ENCODE measurements at regions of chr5 and their contacts with region 1.

Region 1: GRCh38 chr5:41856644-41857491 is 13.4 kb downstream of the OXCT1 start:
- DNase-seq: peak; percentile 64
- H3K4me3 ChIP-seq: no peak overlapping the region
- H3K27ac ChIP-seq: peak overlapping the region in 1 of 2 donors; percentile 49
- H3K4me1 ChIP-seq: peaks cover 8% of the 10 kb centered on the region
- H3K27me3 ChIP-seq: no peaks in the 10 kb centered on the region
- CTCF ChIP-seq: peak; percentile 37 to 76 (median 74)
- POLR2A ChIP-seq: no peak

Region 2: DNA sequence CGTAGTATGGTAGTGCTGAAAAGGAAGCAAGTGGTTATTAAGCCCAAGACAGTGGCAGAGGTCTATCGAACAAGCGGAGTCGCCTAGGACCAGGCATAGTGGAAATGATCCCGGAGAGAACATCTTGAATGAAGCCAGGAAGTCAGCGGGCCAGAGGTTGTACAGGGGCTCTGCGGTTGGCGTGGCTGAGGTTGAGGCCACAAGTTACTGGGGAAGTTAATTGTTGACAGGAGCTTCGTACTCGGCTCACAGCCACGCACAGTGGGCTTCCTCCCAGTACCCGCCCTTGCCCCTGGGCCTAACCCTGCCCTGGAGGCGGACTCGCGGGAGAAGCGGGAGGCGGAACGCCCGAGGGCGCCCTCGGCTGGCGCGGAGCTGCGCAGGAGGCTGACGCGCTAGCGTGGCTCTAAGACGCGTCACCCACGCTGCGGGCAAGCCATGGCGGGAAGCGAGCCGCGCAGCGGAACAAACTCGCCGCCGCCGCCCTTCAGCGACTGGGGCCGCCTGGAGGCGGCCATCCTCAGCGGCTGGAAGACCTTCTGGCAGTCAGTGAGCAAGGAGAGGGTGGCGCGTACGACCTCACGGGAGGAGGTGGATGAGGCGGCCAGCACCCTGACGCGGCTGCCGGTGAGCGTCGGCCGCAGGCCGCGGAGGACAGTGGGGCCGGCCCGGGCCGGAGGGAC is 68.1 kb after region 1 on chr5 and contains the start of gene FBXO4:
- intact Hi-C with region 1: loop called (anchors 2 kb)
- DNase-seq: peak; percentile 74
- H3K4me3 ChIP-seq: peak within 1 kb of the TSS; percentile 80 to 82
- H3K27ac ChIP-seq: peak within 1 kb of the TSS; percentile 94 to 97
- H3K4me1 ChIP-seq: no peaks in the 10 kb centered on the region
- H3K27me3 ChIP-seq: no peaks in the 10 kb centered on the region
- CTCF ChIP-seq: peak in 3 of 4 experiments; percentile 42 to 57 (median 54)
- POLR2A ChIP-seq: peak; percentile 30
- total RNA-seq, gene FBXO4: 14.4 to 25.7 TPM

Region 3: DNA sequence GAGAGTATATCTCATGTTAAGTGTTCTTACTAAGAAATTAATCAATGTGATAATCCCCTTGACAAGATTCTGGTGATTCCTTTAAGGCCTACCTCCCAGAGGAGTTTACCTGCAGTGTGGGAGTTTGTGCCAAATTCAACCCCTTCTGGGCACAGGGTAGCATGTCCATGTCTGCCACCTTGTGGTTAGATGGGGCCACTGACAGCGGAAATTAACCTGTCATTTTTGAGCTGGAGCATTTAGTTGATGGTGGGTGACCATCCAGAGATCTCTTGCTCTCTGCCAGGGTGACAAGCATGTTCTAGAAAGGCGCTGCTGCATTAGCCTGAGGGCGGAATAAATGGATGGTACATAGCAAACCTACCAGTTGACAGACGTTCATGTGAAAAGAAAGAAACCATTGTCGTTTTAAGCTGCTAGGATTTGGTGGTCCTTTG is 200.4 kb after region 1 on chr5:
- intact Hi-C with region 1: loop called (anchors 10 kb)
- DNase-seq: peak; percentile 33
- H3K4me3 ChIP-seq: no peak overlapping the region
- H3K27ac ChIP-seq: no peak overlapping the region
- H3K4me1 ChIP-seq: no peaks in the 10 kb centered on the region
- H3K27me3 ChIP-seq: no peaks in the 10 kb centered on the region
- CTCF ChIP-seq: peak; percentile 18 to 71 (median 59)
- POLR2A ChIP-seq: no peak

Region 4: DNA sequence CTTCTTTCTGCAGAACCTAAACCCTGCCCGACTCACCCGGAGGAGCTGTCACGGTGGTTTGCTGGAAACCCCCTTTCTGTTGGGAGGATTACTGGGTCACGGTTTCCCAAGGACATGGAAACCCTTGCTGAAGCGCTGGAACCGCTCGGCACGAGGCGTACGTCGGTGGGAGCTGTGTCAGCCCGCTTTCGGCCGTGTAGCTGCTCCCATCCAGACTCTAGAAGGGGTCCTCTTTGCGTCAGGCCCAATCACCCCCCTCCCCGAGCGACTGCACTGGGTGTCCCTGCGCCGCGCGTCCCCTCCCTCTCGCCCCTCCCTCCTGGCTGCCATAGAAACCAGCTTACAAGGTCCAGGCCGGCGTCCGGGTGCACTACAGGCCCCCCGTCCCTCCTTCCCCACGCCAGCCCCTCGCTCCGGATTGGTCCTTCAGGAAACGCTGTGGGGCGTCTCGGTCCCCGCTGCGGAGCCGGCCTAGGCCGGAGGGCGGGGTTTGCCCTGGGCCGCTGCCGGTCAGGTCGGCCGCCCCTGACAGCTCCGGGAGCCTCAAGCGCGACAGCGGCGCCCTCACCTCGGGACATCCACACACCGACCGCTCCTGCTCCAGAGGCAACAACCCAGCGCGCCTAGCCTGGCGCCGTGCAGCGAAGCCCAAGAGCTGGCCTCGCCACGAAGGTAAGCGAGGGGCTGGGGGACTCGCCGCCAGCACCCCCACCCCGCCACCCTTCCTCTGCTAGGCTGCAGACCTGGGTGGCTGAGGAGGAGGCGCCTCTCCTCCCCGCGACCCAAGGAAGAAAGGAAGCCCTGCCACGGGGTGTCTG is 1335.1 kb after region 1 on chr5 and contains the start of gene NIM1K:
- intact Hi-C with region 1: no loop called
- DNase-seq: peak; percentile 26
- H3K4me3 ChIP-seq: peak within 1 kb of the TSS; percentile 34 to 43
- H3K27ac ChIP-seq: no peak within 1 kb of the TSS
- H3K4me1 ChIP-seq: peaks cover 3% of the 10 kb centered on the region
- H3K27me3 ChIP-seq: no peaks in the 10 kb centered on the region
- CTCF ChIP-seq: no peak
- POLR2A ChIP-seq: no peak
- total RNA-seq, gene NIM1K: 0.14 TPM in 1 of 2 donors, not detected in the other